Naive thymus-derived CD4-positive, alpha-beta T cell (primary cell): ENCODE measurements at regions of chr7 and their contacts with region 1.

Region 1: DNA sequence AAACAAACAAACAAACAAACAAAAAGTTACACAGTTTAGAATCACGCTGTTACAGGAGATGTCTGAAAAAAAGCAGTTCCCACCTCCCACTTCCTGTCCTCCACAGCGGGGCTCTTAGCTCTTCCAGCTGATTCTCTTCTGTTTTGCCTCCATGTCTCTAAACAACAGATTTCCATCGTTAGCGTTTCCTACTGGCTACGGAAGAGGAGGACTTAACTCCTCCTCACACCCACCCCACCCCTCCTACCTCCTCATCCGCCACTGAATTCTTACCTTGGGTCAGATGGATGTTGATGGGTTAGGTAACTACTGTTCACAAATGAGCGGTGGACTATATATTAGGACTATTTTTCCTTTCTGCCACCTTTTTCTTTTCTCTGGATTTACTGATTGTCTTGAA is 36.8 kb upstream of the NUB1 start:
- DNase-seq: no peak
- ATAC-seq: no peak
- H3K4me3 ChIP-seq: no peak overlapping the region
- H3K4me3 Mint-ChIP-seq: peak overlapping the region; percentile 6 to 78 (median 63)
- H3K27ac ChIP-seq: no peak overlapping the region
- H3K27ac Mint-ChIP-seq: no peak overlapping the region
- H3K4me1 ChIP-seq: peaks cover 3 to 6% of the 10 kb centered on the region in 2 donors
- H3K4me1 Mint-ChIP-seq: peaks cover 0 to 21% (median 12%) of the 10 kb centered on the region in 7 donors
- H3K27me3 ChIP-seq: no peaks in the 10 kb centered on the region
- H3K27me3 Mint-ChIP-seq: peaks cover 19 to 46% (median 28%) of the 10 kb centered on the region in 5 donors

Region 2: DNA sequence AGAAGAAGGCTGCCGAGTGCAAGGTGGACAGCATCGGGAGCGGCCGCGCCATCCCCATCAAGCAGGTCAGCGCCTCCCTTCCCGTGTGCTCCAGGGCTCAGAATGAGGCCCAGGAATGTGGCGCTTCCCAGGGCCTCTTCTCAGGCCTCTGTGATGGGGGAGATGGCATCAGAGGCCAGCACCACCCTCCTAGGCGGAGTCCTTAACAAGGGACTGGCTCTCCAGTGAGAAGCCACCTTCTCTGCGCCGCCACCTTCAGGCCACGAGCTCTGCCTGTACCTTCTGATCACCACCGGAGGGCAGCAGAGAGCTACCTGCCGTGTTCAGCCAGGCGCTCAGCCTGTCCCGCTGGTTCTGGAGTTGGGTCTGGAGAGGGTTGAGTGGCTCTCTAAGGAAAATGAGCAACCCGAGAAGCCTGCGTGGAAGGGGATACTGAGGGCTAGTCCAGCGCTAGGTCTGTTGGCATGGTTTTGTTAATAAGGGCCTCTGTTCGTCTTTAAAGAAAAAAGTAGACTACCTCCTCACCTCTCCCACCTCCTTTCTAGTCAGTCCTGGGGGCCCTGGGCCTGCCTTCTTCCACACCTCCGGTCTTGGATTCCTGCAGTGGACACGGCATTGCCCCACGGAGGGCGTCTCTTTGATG is 180.9 kb before region 1 on chr7:
- CTCF ChIA-PET with region 1: interaction called, 5 read pairs
- POLR2A ChIA-PET with region 1: no interaction called
- intact Hi-C with region 1: loop called in 1 of 2 experiments (anchors 1 kb)
- DNase-seq: peak; percentile 61 to 86 (median 77)
- ATAC-seq: peak; percentile 92
- H3K4me3 ChIP-seq: no peak overlapping the region
- H3K4me3 Mint-ChIP-seq: no peak overlapping the region
- H3K27ac ChIP-seq: no peak overlapping the region
- H3K27ac Mint-ChIP-seq: no peak overlapping the region
- H3K4me1 ChIP-seq: no peaks in the 10 kb centered on the region
- H3K4me1 Mint-ChIP-seq: peaks cover 0 to 15% (median 6%) of the 10 kb centered on the region in 7 donors
- H3K27me3 ChIP-seq: no peaks in the 10 kb centered on the region
- H3K27me3 Mint-ChIP-seq: no peaks in the 10 kb centered on the region

Region 3: DNA sequence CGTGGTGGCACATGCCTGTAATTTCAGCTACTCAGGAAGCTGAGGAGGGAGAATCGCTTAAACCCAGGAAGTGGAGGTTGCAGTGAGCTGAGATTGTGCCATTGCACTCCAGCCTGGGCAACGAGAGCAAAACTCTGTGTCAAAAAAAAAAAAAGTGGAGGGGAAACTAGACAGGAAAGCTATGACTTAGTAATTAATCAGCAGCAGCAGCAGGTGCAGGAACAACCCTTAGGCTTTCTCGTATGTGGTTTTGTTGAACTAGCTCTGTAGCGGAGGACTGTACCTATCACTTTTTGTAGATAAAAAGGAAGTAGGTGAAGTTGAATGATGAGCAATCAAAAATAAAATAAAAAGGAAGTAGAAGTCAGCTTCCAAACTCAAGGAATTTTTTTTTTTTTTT is 1207.8 kb after region 1 on chr7:
- CTCF ChIA-PET with region 1: no interaction called
- POLR2A ChIA-PET with region 1: no interaction called
- intact Hi-C with region 1: no loop called
- DNase-seq: peak in 7 of 9 donors; percentile 19 to 54 (median 31)
- ATAC-seq: peak; percentile 79
- H3K4me3 ChIP-seq: peak overlapping the region; percentile 39
- H3K4me3 Mint-ChIP-seq: peak overlapping the region; percentile 58 to 87 (median 78)
- H3K27ac ChIP-seq: peak overlapping the region; percentile 2
- H3K27ac Mint-ChIP-seq: peak overlapping the region in 7 of 9 donors; percentile 15 to 77 (median 51)
- H3K4me1 ChIP-seq: peaks cover 0 to 4% of the 10 kb centered on the region in 2 donors
- H3K4me1 Mint-ChIP-seq: peaks cover 4 to 20% (median 13%) of the 10 kb centered on the region in 7 donors
- H3K27me3 ChIP-seq: no peaks in the 10 kb centered on the region
- H3K27me3 Mint-ChIP-seq: peaks cover 0 to 4% (median 0%) of the 10 kb centered on the region in 5 donors